Caco-2 (cell line): ENCODE measurements at regions of chr5 and their contacts with region 1.

Region 1: GRCh38 chr5:151252762-151253604 is at the start of gene GM2A:
- DNase-seq: peak; percentile 99 to 100
- H3K4me3 ChIP-seq: peak within 1 kb of the TSS; percentile 76
- H3K4me3 Mint-ChIP-seq: peak within 1 kb of the TSS; percentile 76
- H3K27ac Mint-ChIP-seq: peak within 1 kb of the TSS; percentile 50
- H3K4me1 ChIP-seq: peaks cover 16% of the 10 kb centered on the region
- H3K4me1 Mint-ChIP-seq: peaks cover 23% of the 10 kb centered on the region
- H3K27me3 ChIP-seq: no peaks in the 10 kb centered on the region
- H3K27me3 Mint-ChIP-seq: no peaks in the 10 kb centered on the region
- CTCF ChIP-seq: no peak
- total RNA-seq, gene GM2A: 27.6 and 28.0 TPM in 2 replicates

Region 2: GRCh38 chr5:151208481-151208914 is 44.5 kb before region 1 on chr5:
- CTCF ChIA-PET with region 1: no interaction called
- POLR2A ChIA-PET with region 1: no interaction called
- intact Hi-C with region 1: no loop called
- DNase-seq: peak in 1 of 2 experiments; percentile 7
- H3K4me3 ChIP-seq: no peak overlapping the region
- H3K4me3 Mint-ChIP-seq: no peak overlapping the region
- H3K27ac Mint-ChIP-seq: no peak overlapping the region
- H3K4me1 ChIP-seq: no peaks in the 10 kb centered on the region
- H3K4me1 Mint-ChIP-seq: no peaks in the 10 kb centered on the region
- H3K27me3 ChIP-seq: no peaks in the 10 kb centered on the region
- H3K27me3 Mint-ChIP-seq: no peaks in the 10 kb centered on the region
- CTCF ChIP-seq: no peak

Region 3: GRCh38 chr5:151223469-151224264 is 29.3 kb before region 1 on chr5 and contains the start of gene CCDC69:
- CTCF ChIA-PET with region 1: no interaction called
- POLR2A ChIA-PET with region 1: interaction called, 17 read pairs
- intact Hi-C with region 1: no loop called
- DNase-seq: peak; percentile 83 to 85
- H3K4me3 ChIP-seq: peak within 1 kb of the TSS; percentile 62
- H3K4me3 Mint-ChIP-seq: peak within 1 kb of the TSS; percentile 84
- H3K27ac Mint-ChIP-seq: peak within 1 kb of the TSS; percentile 52
- H3K4me1 ChIP-seq: peaks cover 10% of the 10 kb centered on the region
- H3K4me1 Mint-ChIP-seq: no peaks in the 10 kb centered on the region
- H3K27me3 ChIP-seq: no peaks in the 10 kb centered on the region
- H3K27me3 Mint-ChIP-seq: no peaks in the 10 kb centered on the region
- CTCF ChIP-seq: peak in 1 of 2 experiments; percentile 60
- total RNA-seq, gene CCDC69: 5.1 TPM in 2 replicates

Region 4: GRCh38 chr5:151239237-151239861 is 13.6 kb before region 1 on chr5:
- CTCF ChIA-PET with region 1: interaction called, 11 read pairs
- POLR2A ChIA-PET with region 1: no interaction called
- intact Hi-C with region 1: no loop called
- DNase-seq: peak; percentile 70 to 74
- H3K4me3 ChIP-seq: no peak overlapping the region
- H3K4me3 Mint-ChIP-seq: no peak overlapping the region
- H3K27ac Mint-ChIP-seq: no peak overlapping the region
- H3K4me1 ChIP-seq: peaks cover 9% of the 10 kb centered on the region
- H3K4me1 Mint-ChIP-seq: peaks cover 9% of the 10 kb centered on the region
- H3K27me3 ChIP-seq: no peaks in the 10 kb centered on the region
- H3K27me3 Mint-ChIP-seq: no peaks in the 10 kb centered on the region
- CTCF ChIP-seq: peak; percentile 87 to 92

Region 5: DNA sequence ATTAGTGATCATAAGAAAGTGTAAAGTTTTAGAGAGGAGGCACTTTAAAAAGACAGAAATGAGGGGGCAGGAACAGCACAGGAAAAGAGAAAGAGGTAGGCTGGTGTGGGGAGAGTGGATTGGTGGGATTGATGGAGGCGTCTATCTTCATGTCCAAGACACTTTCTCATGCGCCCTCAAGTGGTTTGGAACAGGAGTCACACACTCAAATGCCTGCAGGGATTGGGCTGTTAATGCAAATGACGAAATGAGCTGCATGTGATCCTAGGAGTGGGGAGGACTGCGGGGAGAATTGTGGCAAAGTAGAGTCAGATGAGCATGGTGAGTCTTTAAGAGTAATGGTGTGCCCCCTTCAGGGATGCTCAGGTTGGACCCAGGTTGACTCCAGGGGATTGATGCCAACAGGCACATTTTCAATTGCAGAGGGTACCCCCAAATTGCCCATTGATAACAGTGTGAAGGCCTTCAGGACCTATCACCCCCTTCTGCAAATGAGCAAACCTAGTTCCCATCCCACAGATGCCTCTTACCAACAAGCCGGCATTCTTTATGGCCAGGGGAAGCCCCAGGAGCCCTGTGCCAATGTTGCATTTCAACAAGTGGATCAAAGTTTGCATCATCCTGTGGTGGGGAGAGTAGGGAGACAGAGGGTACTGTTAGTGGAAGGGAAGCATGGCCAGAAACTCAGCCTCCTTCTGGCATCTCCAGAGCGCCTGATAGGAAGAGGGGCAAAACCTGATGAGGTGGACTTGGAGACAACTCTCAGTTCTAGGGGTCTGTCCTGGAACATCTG is 45.3 kb after region 1 on chr5:
- CTCF ChIA-PET with region 1: interaction called, 17 read pairs
- POLR2A ChIA-PET with region 1: interaction called, 5 read pairs
- intact Hi-C with region 1: loop called (anchors 1 kb)
- DNase-seq: peak; percentile 68 to 75
- H3K4me3 ChIP-seq: no peak overlapping the region
- H3K4me3 Mint-ChIP-seq: no peak overlapping the region
- H3K27ac Mint-ChIP-seq: no peak overlapping the region
- H3K4me1 ChIP-seq: peaks cover 3% of the 10 kb centered on the region; the same call in 1 of the 2 replicates
- H3K4me1 Mint-ChIP-seq: no peaks in the 10 kb centered on the region
- H3K27me3 ChIP-seq: peaks cover 2% of the 10 kb centered on the region; the same call in 1 of the 2 replicates
- H3K27me3 Mint-ChIP-seq: peaks cover 9% of the 10 kb centered on the region
- CTCF ChIP-seq: peak; percentile 64 to 74

Region 6: DNA sequence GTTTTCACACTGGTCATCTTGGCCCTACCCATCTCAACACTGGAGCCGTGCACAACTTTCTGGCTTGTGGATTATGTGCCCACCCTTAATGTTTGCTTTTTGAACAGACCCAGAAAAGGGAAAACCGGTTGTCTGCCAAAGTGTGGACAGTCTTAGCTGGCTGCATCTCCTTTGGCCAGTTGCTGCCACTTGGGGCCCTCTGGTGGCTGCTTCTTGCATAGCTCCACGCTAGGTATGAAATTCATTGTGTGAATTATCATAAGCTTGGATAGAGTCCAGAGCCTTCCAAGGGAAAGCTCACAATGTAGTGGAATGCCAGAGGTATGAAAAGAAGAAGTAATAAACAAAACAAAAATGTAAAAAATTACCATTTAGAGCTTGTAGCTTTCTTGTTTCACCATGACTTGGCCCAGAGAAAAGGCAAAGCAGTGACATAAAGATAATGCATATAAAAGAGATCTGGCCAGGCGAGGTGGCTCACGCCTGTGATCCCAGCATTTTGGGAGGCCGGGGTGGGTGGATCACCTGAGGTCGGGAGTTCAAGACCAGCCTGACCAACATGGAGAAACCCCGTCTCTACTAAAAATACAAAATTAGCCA is 63.1 kb after region 1 on chr5:
- CTCF ChIA-PET with region 1: interaction called, 19 read pairs
- POLR2A ChIA-PET with region 1: no interaction called
- intact Hi-C with region 1: loop called (anchors 5 kb)
- DNase-seq: peak; percentile 74 to 81
- H3K4me3 ChIP-seq: no peak overlapping the region
- H3K4me3 Mint-ChIP-seq: no peak overlapping the region
- H3K27ac Mint-ChIP-seq: no peak overlapping the region
- H3K4me1 ChIP-seq: peaks cover 8% of the 10 kb centered on the region; the same call in 1 of the 2 replicates
- H3K4me1 Mint-ChIP-seq: peaks cover 13% of the 10 kb centered on the region
- H3K27me3 ChIP-seq: no peaks in the 10 kb centered on the region
- H3K27me3 Mint-ChIP-seq: no peaks in the 10 kb centered on the region
- CTCF ChIP-seq: peak; percentile 89 to 92

Region 7: DNA sequence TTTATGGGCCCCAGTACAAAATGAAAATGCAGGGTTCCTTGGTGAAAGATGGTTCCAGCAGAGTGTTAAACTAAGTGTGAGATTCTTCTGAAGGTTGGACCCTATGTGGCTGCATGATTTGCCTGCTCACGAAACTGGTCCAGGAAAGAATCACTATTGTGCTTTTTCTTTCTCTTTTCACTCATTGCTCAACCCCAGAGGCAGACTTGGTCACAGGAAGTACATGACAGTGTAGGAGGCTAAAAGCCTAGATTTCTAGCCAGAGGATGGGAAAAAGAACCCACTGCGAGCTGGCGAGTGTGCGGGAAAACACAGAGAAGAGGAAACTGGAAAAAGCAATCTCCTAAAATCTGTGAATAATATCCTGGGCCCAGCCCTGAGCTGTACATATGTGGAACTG is 75.8 kb after region 1 on chr5:
- CTCF ChIA-PET with region 1: no interaction called
- POLR2A ChIA-PET with region 1: no interaction called
- intact Hi-C with region 1: no loop called
- DNase-seq: no peak
- H3K4me3 ChIP-seq: no peak overlapping the region
- H3K4me3 Mint-ChIP-seq: no peak overlapping the region
- H3K27ac Mint-ChIP-seq: no peak overlapping the region
- H3K4me1 ChIP-seq: no peaks in the 10 kb centered on the region
- H3K4me1 Mint-ChIP-seq: no peaks in the 10 kb centered on the region
- H3K27me3 ChIP-seq: no peaks in the 10 kb centered on the region
- H3K27me3 Mint-ChIP-seq: peaks cover 5% of the 10 kb centered on the region
- CTCF ChIP-seq: no peak

Region 8: DNA sequence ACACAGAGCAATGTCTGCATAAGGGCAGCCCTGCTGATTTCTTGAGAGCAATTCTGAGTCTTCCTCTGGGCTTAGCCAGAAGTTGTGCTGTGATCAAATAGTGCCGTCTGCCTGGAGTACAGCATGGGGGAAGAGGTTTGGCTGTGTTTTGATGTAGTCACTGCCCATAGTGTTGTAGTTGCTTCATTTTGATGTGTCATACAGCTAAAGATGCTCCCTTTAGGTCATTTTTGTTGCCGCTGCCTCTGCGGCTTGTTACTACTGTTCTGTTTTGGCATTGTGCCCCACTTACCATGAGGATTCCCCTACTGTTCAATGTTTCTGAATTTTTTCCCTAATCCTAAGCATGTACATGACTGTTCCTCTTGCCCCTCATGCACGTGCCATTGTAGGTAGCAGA is 217.5 kb after region 1 on chr5:
- CTCF ChIA-PET with region 1: no interaction called
- POLR2A ChIA-PET with region 1: no interaction called
- intact Hi-C with region 1: no loop called
- DNase-seq: no peak
- H3K4me3 ChIP-seq: no peak overlapping the region
- H3K4me3 Mint-ChIP-seq: no peak overlapping the region
- H3K27ac Mint-ChIP-seq: no peak overlapping the region
- H3K4me1 ChIP-seq: no peaks in the 10 kb centered on the region
- H3K4me1 Mint-ChIP-seq: no peaks in the 10 kb centered on the region
- H3K27me3 ChIP-seq: no peaks in the 10 kb centered on the region
- H3K27me3 Mint-ChIP-seq: no peaks in the 10 kb centered on the region
- CTCF ChIP-seq: no peak

Region 9: DNA sequence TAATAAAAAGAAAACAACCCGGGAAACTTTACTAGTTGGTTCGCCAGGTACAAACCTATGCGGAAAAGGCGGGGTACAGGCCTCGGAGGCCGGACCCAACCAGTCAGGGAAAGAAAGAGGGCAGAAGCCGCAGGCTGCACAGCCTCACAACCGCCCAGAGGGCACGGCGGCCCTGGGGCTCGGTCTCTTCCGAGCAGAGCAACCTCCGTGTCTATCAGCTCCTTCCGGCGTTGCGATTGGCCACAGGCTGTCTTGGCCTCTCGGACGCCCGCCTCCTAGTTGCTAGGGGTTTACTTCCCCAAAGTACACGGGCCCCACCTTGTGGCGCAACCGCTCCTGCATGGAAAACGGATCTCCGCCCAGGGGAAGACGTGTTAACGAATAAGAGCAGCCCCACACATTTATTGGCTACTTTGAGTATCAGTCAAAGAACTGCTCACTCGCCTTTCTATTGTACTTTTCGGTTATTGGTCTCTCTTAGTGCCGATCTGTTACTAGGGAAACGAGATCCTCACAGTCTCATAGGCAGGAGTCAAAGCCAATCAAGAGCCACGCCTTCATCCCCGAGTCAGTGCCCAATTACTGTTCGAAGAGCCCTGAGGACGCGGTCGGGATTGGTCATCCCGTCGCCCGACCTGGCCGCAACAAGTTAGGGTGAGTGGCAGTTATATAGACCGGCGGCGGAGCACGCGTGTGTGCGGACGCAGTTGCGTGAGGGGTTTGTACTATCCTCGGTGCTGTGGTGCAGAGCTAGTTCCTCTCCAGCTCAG is 518.5 kb after region 1 on chr5 and contains the start of gene G3BP1:
- CTCF ChIA-PET with region 1: no interaction called
- POLR2A ChIA-PET with region 1: interaction called, 7 read pairs
- intact Hi-C with region 1: loop called (anchors 5 kb)
- DNase-seq: peak; percentile 100
- H3K4me3 ChIP-seq: peak within 1 kb of the TSS; percentile 98
- H3K4me3 Mint-ChIP-seq: no peak within 1 kb of the TSS
- H3K27ac Mint-ChIP-seq: no peak within 1 kb of the TSS
- H3K4me1 ChIP-seq: no peaks in the 10 kb centered on the region; the same call in 1 of the 2 replicates
- H3K4me1 Mint-ChIP-seq: peaks cover 17% of the 10 kb centered on the region
- H3K27me3 ChIP-seq: no peaks in the 10 kb centered on the region
- H3K27me3 Mint-ChIP-seq: no peaks in the 10 kb centered on the region
- CTCF ChIP-seq: peak; percentile 4 to 60
- total RNA-seq, gene G3BP1: 291 and 329 TPM in 2 replicates